Activated CD4-positive, alpha-beta T cell treated with anti-CD3 and anti-CD28 coated beads, Interleukin-2, amount 10 ng/mL, durations not matched to agents 7 days and 5 days (primary cell): ENCODE measurements at regions of chr16 and their contacts with region 1.

Region 1: DNA sequence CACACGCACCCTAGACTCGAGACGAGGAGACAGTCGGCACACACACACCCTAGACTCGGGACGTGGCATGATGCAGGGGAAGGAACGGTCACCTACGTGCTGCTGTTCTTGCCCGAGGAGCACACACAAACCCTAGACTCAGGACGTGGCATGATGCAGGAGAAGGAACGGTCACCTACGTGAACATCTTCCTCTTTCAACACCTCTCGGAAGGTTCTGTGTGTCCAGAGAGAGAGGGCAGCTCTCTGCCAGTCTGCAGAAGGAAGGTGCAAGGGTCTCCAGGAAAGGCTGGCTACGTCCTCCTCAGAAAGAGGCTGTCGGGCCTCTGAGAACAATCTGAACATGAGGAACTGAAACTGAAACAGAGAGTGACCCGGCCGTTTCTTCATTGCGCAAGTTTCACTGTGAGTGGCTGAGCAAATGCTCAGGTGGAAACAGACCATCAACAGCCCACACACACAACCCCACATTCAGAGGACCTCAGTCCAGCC is 43.4 kb downstream of the ZNF276 start:
- DNase-seq: peak; percentile 53
- H3K4me3 Mint-ChIP-seq: peak overlapping the region; percentile 61
- H3K27ac Mint-ChIP-seq: peak overlapping the region; percentile 93
- H3K4me1 Mint-ChIP-seq: peaks cover 43% of the 10 kb centered on the region
- H3K27me3 Mint-ChIP-seq: no peaks in the 10 kb centered on the region

Region 2: DNA sequence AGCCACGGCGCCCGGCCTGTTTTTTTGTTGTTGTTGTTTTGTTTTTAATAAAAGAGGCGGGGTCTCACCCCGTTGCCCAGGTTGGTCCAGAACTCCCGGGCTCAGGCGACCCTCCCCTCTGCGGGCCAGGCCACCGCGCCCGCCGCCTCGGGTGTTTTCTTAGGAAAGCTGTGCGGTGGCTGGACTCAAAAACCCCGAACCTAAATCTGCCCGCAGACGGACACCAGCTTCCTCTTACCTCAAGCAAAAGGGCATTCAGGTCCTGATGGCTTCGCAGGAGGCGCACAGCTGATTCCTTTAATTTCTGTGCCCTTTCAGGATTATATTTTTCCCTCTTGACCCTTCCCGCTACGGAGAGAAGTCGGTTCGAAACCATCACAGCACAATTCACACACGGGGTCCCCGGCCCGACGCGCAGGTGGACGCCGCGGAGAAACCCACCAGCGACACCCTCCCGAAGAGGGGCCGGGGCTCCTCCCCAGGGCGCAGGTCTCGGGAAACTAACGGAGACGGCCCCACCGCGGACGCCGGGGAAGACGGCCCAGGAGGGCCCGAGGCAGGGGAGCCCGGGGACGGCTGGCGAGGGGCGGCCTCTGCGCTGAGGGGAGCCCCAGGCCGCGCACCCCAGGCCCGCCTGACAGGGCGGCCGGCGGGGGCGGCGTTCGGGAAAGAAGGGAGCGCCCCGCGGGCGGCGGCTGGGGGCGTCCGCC is 51.0 kb after region 1 on chr16:
- CTCF ChIA-PET with region 1: no interaction called
- POLR2A ChIA-PET with region 1: interaction called, 10 read pairs
- DNase-seq: no peak
- H3K4me3 Mint-ChIP-seq: peak overlapping the region; percentile 88
- H3K27ac Mint-ChIP-seq: peak overlapping the region; percentile 81
- H3K4me1 Mint-ChIP-seq: peaks cover 40% of the 10 kb centered on the region
- H3K27me3 Mint-ChIP-seq: no peaks in the 10 kb centered on the region